ENCODE measurements at regions of chr15 and their contacts with region 1.

Region 1: GRCh38 chr15:56491110-56491722 is 26.3 kb upstream of the MNS1 start:
- DNase-seq: peak; percentile 61
- H3K4me3 ChIP-seq: no peak overlapping the region
- H3K27ac ChIP-seq: no peak overlapping the region
- H3K27me3 ChIP-seq: peaks cover 12% of the 10 kb centered on the region
- CTCF ChIP-seq: peak; percentile 97

Region 2: GRCh38 chr15:56272454-56272853 is 218.8 kb before region 1 on chr15:
- CTCF ChIA-PET with region 1: no interaction called
- POLR2A ChIA-PET with region 1: no interaction called
- DNase-seq: no peak
- H3K4me3 ChIP-seq: no peak overlapping the region
- H3K27ac ChIP-seq: no peak overlapping the region
- H3K27me3 ChIP-seq: peaks cover 2% of the 10 kb centered on the region
- CTCF ChIP-seq: no peak

Region 3: GRCh38 chr15:56471440-56472069 is 19.7 kb before region 1 on chr15:
- CTCF ChIA-PET with region 1: interaction called, 25 read pairs
- POLR2A ChIA-PET with region 1: no interaction called
- DNase-seq: no peak
- H3K4me3 ChIP-seq: no peak overlapping the region
- H3K27ac ChIP-seq: no peak overlapping the region
- H3K27me3 ChIP-seq: peaks cover 2% of the 10 kb centered on the region
- CTCF ChIP-seq: no peak

Region 4: DNA sequence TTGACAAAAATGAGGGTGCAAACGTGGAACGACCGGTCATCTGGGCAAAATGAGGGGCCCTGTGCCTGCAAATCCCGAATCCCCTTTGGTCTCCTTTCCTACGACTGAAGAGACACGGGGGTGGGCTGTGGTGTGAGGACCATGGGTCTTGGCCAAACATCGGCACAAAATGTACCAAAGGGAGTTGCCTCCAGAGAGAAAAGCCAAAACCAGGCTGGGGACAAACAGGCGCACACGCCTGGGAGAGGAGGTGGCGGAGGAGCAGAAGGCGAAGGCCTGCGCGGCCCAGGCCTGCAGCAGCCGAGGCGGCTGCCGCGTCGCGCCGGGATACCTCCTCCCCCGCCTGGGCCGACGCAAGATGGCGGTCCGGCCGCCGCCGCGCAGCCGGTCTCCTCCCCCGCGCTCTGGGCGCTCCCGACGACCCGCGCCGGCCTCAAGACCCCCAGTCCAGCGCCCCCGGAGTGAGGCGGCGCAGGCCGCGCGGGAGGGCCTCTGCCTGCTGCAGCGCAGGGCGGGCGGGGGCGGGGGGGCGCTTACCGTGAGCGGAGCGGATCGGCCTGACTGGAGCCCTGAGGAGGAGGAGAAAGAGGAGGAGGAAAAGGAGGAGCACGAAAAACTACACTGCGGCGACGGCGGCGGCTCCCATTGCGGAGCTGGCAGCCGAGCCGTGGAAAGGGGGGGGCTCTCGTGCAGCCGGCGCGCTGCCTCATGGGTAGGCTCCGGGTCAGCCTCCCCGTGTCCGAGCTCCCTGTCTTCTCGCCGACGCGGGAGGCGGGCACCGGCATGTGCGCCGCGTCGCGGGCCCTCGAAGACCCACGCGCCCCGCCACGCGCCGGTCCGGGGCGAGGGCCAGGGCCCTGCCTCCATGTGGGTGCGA is 241.9 kb after region 1 on chr15 and contains the start of gene ZNF280D:
- CTCF ChIA-PET with region 1: interaction called, 10 read pairs
- POLR2A ChIA-PET with region 1: no interaction called
- DNase-seq: peak; percentile 66
- H3K4me3 ChIP-seq: peak within 1 kb of the TSS; percentile 73
- H3K27ac ChIP-seq: peak within 1 kb of the TSS; percentile 88
- H3K27me3 ChIP-seq: no peaks in the 10 kb centered on the region
- CTCF ChIP-seq: no peak
- polyA plus RNA-seq, gene ZNF280D: 12.9 and 17.6 TPM in 2 replicates

Region 5: GRCh38 chr15:57138349-57138788 is 647.2 kb after region 1 on chr15:
- CTCF ChIA-PET with region 1: interaction called, 12 read pairs
- POLR2A ChIA-PET with region 1: no interaction called
- DNase-seq: no peak
- H3K4me3 ChIP-seq: no peak overlapping the region
- H3K27ac ChIP-seq: no peak overlapping the region
- H3K27me3 ChIP-seq: no peaks in the 10 kb centered on the region
- CTCF ChIP-seq: peak; percentile 93

Region 6: GRCh38 chr15:57213862-57214261 is 722.6 kb after region 1 on chr15:
- CTCF ChIA-PET with region 1: interaction called, 10 read pairs
- POLR2A ChIA-PET with region 1: no interaction called
- DNase-seq: no peak
- H3K4me3 ChIP-seq: no peak overlapping the region
- H3K27ac ChIP-seq: no peak overlapping the region
- H3K27me3 ChIP-seq: no peaks in the 10 kb centered on the region
- CTCF ChIP-seq: peak; percentile 56

Region 7: GRCh38 chr15:57541805-57542504 is 1050.7 kb after region 1 on chr15:
- CTCF ChIA-PET with region 1: interaction called, 12 read pairs
- POLR2A ChIA-PET with region 1: no interaction called
- DNase-seq: peak; percentile 52
- H3K4me3 ChIP-seq: no peak overlapping the region
- H3K27ac ChIP-seq: no peak overlapping the region
- H3K27me3 ChIP-seq: peaks cover 15% of the 10 kb centered on the region
- CTCF ChIP-seq: peak; percentile 95